ENCODE measurements at regions of chr2 and their contacts with region 1.

Region 1: DNA sequence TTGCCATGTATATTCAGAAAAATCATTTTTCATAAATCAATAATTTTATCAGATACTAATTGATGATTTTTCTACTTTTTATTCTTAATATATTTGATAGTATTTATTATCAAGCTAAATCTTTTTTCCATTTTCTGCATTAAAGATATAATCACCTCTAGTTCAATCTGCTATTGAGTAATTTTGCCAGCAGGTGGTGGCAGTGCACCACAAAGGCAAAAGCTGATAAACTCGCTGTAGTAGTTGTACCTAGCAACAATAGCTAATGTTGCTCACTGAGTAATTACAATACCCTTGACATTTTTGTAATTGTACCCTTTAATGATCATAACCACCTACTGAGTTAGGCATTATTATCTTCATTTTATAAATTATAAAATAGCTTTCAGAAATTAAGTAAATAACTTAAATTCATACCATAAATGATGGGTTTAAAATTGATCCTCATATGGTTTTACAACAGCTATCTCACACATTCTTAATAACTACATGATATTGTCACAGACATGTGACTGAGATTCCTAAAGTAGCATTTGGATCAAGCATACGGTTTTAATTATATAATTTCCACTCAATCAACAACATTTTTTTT is 52.0 kb upstream of the CALCRL start:
- DNase-seq: no peak
- ATAC-seq: peak; percentile 92
- H3K4me3 ChIP-seq: no peak overlapping the region
- H3K27ac ChIP-seq: no peak overlapping the region
- H3K4me1 ChIP-seq: peaks cover 33% of the 10 kb centered on the region
- H3K27me3 ChIP-seq: no peaks in the 10 kb centered on the region
- CTCF ChIP-seq: peak; percentile 84

Region 2: GRCh38 chr2:187574969-187575750 is 75.1 kb after region 1 on chr2:
- intact Hi-C with region 1: loop called (anchors 5 kb)
- DNase-seq: no peak
- ATAC-seq: no peak
- H3K4me3 ChIP-seq: peak overlapping the region; percentile 8
- H3K27ac ChIP-seq: peak overlapping the region; percentile 65
- H3K4me1 ChIP-seq: no peaks in the 10 kb centered on the region
- H3K27me3 ChIP-seq: no peaks in the 10 kb centered on the region
- CTCF ChIP-seq: no peak

Region 3: DNA sequence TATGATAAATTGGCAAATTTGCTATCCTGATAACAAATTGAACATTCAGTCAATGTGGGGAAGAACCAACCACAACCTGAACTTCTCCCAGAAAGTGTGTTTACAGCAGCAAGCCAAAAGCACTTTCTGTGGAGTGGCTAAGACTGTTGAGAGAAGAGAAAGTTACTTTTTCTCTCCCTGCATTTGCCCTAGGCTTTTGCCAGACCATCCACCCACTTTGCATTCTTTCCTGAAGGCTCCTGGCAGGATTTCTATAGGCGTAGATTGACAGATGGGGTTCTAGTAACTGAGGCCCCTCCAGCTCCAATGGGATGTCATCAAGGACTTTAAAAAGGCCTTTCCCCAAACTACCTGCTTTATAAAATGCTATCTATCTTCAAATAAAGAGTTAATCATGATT is 1006.8 kb after region 1 on chr2:
- intact Hi-C with region 1: loop called (anchors 10 kb)
- DNase-seq: no peak
- ATAC-seq: no peak
- H3K4me3 ChIP-seq: no peak overlapping the region
- H3K27ac ChIP-seq: no peak overlapping the region
- H3K4me1 ChIP-seq: no peaks in the 10 kb centered on the region
- H3K27me3 ChIP-seq: no peaks in the 10 kb centered on the region
- CTCF ChIP-seq: no peak